ENCODE measurements at regions of chr5 and their contacts with region 1.

Region 1: DNA sequence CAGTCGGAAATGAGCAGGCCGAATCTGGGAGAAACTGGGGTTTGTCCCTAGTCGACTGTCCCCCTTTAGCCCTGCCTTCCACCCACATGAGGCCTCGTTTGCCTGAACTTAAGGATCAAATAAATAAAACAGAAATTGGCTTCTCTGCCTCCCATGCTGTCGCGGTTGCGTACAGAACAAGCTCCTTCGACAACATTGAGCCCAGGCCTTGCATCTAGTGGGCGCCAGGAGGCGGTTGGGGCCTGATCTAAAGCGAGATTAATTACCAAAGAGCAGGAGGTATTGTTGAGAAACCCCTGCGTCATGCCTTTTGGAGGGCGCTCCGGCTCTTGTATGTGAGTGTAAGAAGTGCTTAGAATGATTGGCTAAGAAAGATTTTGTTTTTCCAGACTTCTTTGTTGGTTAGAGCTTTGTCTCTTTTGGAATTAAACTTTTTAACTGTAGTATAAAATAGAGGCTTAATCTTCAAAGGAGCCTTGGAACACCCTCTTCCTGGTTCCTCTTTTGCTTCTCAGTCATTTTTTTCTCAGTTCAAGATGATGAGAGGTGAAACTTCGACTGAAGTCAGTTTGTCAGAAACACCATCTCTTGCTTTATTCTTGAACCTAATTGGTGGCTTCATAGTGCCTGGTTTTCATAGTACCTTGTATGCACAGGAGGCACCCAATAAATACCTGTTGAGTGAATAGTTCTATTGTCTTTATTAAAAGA is 827 bp downstream of the ATP6V0E1 start:
- DNase-seq: peak; percentile 88 to 90
- H3K4me3 ChIP-seq: peak overlapping the region; percentile 77 to 87 (median 82)
- H3K27ac ChIP-seq: peak overlapping the region; percentile 93 to 95 (median 94)
- H3K4me1 ChIP-seq: peaks cover 9 to 10% of the 10 kb centered on the region in 2 donors
- H3K27me3 ChIP-seq: no peaks in the 10 kb centered on the region
- CTCF ChIP-seq: peak in 4 of 6 experiments; percentile 59 to 67 (median 60)
- POLR2A ChIP-seq: peak in 1 of 2 donors; percentile 37

Region 2: GRCh38 chr5:172849606-172850453 is 134.6 kb before region 1 on chr5:
- intact Hi-C with region 1: no loop called
- DNase-seq: peak; percentile 94 to 95
- H3K4me3 ChIP-seq: no peak overlapping the region
- H3K27ac ChIP-seq: peak overlapping the region; percentile 95 to 98 (median 97)
- H3K4me1 ChIP-seq: peaks cover 67 to 89% of the 10 kb centered on the region in 2 donors
- H3K27me3 ChIP-seq: no peaks in the 10 kb centered on the region
- CTCF ChIP-seq: no peak
- POLR2A ChIP-seq: no peak

Region 3: DNA sequence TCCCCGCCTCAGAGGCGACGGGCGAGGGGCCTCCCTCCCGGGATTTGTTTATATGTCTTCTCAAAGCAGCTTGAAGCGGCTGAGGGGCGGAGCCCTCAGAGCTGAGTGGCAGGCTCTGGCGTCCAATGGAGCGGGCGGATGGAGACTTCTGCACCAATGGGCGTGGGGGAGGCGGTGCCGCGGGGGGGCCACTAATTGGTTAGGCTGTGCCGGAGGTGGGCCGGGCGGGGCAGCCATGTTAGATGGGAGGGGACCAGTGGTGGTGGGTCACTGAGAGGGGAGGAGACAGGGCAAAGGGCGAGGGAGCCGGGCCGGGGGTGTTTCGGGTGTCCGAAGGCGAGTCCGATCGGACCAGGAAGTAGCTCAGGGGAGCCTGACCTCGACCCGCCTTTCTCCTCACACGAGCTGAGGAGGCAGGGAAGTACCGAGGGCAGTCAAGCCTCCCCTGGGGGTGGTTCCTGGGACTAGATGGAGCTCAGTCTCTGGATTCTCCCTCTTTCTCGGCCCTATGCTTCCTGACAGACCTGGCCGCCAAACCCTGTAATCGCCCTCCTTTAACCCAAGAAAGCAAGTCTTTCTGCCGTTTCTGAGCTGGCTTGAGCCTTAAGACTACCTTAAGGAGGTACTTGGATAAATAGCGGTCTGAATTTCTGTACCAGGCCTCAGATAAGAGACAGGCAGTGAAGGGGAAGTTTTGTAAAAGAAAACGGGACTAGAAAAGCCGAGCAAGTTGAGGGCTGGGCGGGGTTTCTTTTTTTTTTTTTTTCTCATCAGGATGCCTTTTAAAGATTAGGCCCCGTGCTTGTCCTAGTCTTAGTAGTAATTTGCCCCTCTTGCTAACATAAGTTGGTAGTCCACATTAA is 72.9 kb after region 1 on chr5:
- intact Hi-C with region 1: loop called (anchors 5 kb)
- DNase-seq: peak; percentile 100
- H3K4me3 ChIP-seq: peak overlapping the region; percentile 51 to 100 (median 99)
- H3K27ac ChIP-seq: peak overlapping the region; percentile 99
- H3K4me1 ChIP-seq: peaks cover 11 to 13% of the 10 kb centered on the region in 2 donors
- H3K27me3 ChIP-seq: no peaks in the 10 kb centered on the region
- CTCF ChIP-seq: peak in 3 of 6 experiments; percentile 16 to 25 (median 16)
- POLR2A ChIP-seq: peak in 1 of 2 donors; percentile 59

Region 4: DNA sequence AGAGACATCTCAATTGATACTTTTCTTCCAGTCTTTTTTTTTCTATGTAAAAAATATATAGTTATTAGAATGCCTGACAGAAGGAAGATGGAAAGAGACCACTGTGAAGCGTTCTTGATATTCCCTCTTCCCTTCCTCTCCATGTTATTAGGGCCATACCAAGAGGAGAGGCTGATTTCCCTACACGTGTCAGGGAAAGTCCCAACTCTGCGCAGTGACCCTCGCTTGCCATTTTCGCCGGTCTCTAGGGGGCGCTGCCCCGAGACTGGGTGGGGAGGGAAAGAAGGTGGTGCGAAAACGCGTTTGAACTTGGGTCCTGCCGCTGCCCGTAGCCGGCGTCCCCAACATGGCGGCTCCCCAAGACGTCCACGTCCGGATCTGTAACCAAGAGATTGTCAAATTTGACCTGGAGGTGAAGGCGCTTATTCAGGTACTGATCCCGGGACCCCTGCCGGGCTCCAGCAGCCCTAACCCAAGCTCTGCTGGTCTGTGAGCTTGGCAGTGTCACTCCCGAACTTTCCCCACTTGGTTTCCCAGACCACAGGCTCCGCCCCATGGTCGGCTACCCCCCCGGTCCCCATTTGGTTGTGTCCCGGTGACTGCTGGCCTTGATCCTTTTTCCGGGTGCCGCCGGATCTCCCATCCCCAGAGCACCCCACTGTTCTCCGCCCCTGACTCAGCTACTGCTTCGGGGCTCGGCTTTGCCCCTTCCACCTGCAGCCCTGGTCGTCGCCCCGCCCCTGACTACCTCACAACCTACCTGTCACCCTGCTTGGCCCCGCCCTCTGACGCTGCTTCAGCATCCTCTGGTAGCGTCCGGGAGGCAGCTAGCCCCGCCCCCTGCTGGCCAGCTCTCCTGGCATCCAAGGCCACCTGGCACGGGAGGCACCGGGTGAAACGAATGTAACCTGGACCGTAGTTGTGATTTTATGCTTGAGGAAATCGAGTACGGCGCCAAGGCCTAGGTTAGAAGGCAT is 160.1 kb after region 1 on chr5 and contains the start of gene BNIP1:
- intact Hi-C with region 1: loop called (anchors 10 kb)
- DNase-seq: peak; percentile 100
- H3K4me3 ChIP-seq: peak within 1 kb of the TSS; percentile 34 to 83 (median 74)
- H3K27ac ChIP-seq: peak within 1 kb of the TSS; percentile 78 to 95 (median 91)
- H3K4me1 ChIP-seq: no peaks in the 10 kb centered on the region
- H3K27me3 ChIP-seq: no peaks in the 10 kb centered on the region
- CTCF ChIP-seq: peak; percentile 76 to 95 (median 86)
- POLR2A ChIP-seq: peak in 1 of 2 donors; percentile 75
- total RNA-seq, gene BNIP1: 12.0 to 15.9 (median 15.6) TPM

Region 5: GRCh38 chr5:173201636-173202276 is 217.4 kb after region 1 on chr5:
- intact Hi-C with region 1: loop called (anchors 2 kb)
- DNase-seq: no peak
- H3K4me3 ChIP-seq: no peak overlapping the region
- H3K27ac ChIP-seq: no peak overlapping the region
- H3K4me1 ChIP-seq: no peaks in the 10 kb centered on the region
- H3K27me3 ChIP-seq: no peaks in the 10 kb centered on the region
- CTCF ChIP-seq: no peak
- POLR2A ChIP-seq: no peak

Region 6: GRCh38 chr5:173287086-173287485 is 302.7 kb after region 1 on chr5:
- intact Hi-C with region 1: loop called (anchors 5 kb)
- DNase-seq: no peak
- H3K4me3 ChIP-seq: no peak overlapping the region
- H3K27ac ChIP-seq: no peak overlapping the region
- H3K4me1 ChIP-seq: peaks cover 0 to 10% of the 10 kb centered on the region in 2 donors
- H3K27me3 ChIP-seq: no peaks in the 10 kb centered on the region
- CTCF ChIP-seq: no peak
- POLR2A ChIP-seq: no peak